Activated B cell treated with CpG ODN at 0.5 μM for 24 hours (primary cell): ENCODE measurements at regions of chr11 and their contacts with region 1.

Region 1: DNA sequence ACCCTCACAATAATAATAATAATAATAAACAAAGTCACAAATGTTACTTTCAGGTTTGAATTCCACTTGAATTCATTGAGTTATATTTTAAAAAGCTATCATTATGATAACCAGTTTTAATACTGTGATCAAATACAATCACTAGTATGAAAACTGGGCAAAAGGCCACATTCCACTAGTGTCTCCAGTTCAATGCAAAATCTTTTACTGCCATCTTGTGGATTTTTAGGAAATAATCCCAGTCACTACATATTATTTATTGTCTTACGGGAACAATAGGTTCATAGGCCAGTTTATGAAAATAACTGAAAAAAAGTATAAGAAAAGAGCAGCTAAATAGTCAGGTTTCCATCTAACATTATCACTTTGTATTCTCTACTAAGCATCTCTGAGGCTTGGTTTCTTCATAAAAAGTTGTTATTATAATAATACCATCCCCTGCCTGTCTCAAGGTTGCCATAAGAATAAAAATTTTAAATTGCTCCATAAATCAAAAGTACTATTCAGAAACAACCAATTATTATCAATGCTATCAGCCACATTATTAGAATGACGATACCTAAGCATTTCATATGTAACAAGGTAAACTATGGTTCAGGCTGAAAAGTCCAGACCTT is 533.9 kb upstream of the CCDC90B start:
- DNase-seq: no peak
- ATAC-seq: no peak
- H3K4me3 Mint-ChIP-seq: no peak overlapping the region
- H3K27ac Mint-ChIP-seq: no peak overlapping the region
- H3K4me1 Mint-ChIP-seq: no peaks in the 10 kb centered on the region
- H3K27me3 Mint-ChIP-seq: peaks cover 9% of the 10 kb centered on the region
- CTCF ChIP-seq: no peak

Region 2: DNA sequence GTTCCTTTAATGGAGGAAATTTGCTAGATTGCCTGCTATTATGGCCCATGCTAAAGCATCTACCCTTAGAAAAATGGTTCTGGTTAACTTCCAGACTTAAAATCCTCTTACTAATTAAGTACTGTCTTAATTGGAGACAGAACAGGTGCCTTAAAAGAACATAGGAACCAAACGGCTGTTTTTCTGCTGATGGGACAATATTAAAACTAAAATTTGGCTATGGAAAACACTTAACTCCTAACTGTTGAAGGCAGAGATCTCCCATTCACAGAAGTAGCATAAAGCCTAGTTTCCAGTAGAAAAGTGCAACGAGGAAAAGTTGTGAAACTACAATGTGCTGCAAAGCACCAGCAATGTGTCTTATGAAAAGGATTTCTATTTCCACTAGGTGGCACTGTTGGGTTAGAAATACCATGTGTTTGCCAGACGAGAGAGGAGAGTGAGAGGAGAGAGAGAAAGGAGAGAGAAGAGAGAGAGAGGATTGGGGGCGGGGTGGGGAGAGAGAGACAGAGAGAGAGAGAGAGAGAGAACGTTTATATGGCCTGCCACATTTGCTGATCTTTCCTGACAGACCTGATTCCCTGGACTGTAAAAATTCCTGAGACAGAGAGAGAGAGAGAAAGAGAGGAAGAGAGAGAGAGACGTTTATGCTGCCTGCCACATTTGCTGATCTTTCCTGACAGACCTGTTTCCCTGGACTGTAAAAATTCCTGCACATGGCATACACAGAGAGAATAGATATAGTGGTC is 1137.9 kb before region 1 on chr11:
- CTCF ChIA-PET with region 1: interaction called, 3 read pairs
- POLR2A ChIA-PET with region 1: interaction called, 3 read pairs
- intact Hi-C with region 1: loop called (anchors 1 kb)
- DNase-seq: no peak
- ATAC-seq: peak; percentile 28
- H3K4me3 Mint-ChIP-seq: no peak overlapping the region
- H3K27ac Mint-ChIP-seq: no peak overlapping the region
- H3K4me1 Mint-ChIP-seq: no peaks in the 10 kb centered on the region
- H3K27me3 Mint-ChIP-seq: peaks cover 13% of the 10 kb centered on the region
- CTCF ChIP-seq: no peak

Region 3: DNA sequence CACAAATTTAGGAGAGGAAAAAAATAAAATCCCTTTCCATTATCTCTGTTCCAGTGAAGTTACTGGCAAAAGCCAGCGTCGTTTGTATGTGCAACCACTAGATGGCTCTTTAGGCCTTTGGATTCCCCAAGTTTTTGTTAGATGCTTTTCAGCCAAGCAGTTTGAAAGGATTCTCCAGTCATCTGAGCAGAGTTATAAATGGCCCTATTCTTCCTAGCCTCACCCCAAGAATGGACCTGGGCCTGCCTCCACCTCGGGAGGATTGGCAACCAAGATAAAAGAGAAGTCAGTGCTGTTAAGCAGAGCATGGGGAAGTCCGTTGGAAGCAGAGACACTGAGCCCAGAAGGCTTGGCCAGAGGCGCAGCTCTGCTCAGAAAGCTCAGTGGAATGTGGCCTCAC is 1101.7 kb before region 1 on chr11:
- CTCF ChIA-PET with region 1: interaction called, 34 read pairs
- POLR2A ChIA-PET with region 1: no interaction called
- intact Hi-C with region 1: loop called (anchors 1 kb)
- DNase-seq: no peak
- ATAC-seq: no peak
- H3K4me3 Mint-ChIP-seq: no peak overlapping the region
- H3K27ac Mint-ChIP-seq: no peak overlapping the region
- H3K4me1 Mint-ChIP-seq: no peaks in the 10 kb centered on the region
- H3K27me3 Mint-ChIP-seq: peaks cover 6% of the 10 kb centered on the region
- CTCF ChIP-seq: peak; percentile 36

Region 4: GRCh38 chr11:82775736-82776346 is 1044.2 kb before region 1 on chr11:
- CTCF ChIA-PET with region 1: no interaction called
- POLR2A ChIA-PET with region 1: no interaction called
- intact Hi-C with region 1: loop called (anchors 1 kb)
- DNase-seq: no peak
- ATAC-seq: peak; percentile 49
- H3K4me3 Mint-ChIP-seq: no peak overlapping the region
- H3K27ac Mint-ChIP-seq: no peak overlapping the region
- H3K4me1 Mint-ChIP-seq: no peaks in the 10 kb centered on the region
- H3K27me3 Mint-ChIP-seq: peaks cover 18% of the 10 kb centered on the region
- CTCF ChIP-seq: no peak

Region 5: GRCh38 chr11:82906244-82906654 is 913.8 kb before region 1 on chr11:
- CTCF ChIA-PET with region 1: interaction called, 3 read pairs
- POLR2A ChIA-PET with region 1: no interaction called
- intact Hi-C with region 1: loop called (anchors 1 kb)
- DNase-seq: no peak
- ATAC-seq: no peak
- H3K4me3 Mint-ChIP-seq: no peak overlapping the region
- H3K27ac Mint-ChIP-seq: peak overlapping the region; percentile 38
- H3K4me1 Mint-ChIP-seq: peaks cover 44% of the 10 kb centered on the region
- H3K27me3 Mint-ChIP-seq: no peaks in the 10 kb centered on the region
- CTCF ChIP-seq: peak; percentile 35

Region 6: DNA sequence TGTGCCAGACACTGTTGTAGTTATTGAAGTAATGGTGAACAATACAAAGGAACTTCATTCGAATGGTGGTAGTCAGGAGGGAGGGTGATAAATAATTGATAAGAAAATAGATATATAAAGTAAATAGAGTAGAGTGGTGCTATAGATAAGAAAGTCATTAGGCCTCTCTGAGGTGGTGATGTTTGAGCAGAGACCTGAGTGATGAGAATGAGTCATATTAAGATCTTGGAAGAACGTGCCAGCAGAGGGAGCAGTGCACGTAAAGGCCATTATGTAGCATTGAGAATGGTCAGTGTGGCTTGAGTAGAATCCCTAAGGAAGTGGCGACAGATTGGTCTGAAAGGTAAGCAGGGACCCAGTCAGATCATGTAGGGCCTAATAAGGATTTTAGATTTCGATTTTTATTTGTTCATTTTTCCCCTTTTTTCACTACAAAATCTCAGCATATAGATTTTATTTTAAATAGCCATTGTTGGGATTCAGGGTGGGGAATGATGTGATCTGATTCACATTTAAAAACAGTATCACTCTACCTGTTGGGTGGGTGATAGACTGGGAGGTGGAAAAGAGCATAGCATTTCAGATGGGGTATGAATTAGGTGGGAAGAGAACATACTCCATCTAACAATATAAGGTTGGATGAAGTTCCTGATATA is 578.6 kb before region 1 on chr11:
- CTCF ChIA-PET with region 1: no interaction called
- POLR2A ChIA-PET with region 1: no interaction called
- intact Hi-C with region 1: loop called (anchors 1 kb)
- DNase-seq: no peak
- ATAC-seq: peak; percentile 47
- H3K4me3 Mint-ChIP-seq: no peak overlapping the region
- H3K27ac Mint-ChIP-seq: no peak overlapping the region
- H3K4me1 Mint-ChIP-seq: no peaks in the 10 kb centered on the region
- H3K27me3 Mint-ChIP-seq: no peaks in the 10 kb centered on the region
- CTCF ChIP-seq: no peak

Region 7: GRCh38 chr11:83292709-83293456 is 527.2 kb before region 1 on chr11:
- CTCF ChIA-PET with region 1: interaction called, 61 read pairs
- POLR2A ChIA-PET with region 1: no interaction called
- intact Hi-C with region 1: loop called (anchors 1 kb)
- DNase-seq: no peak
- ATAC-seq: peak; percentile 79
- H3K4me3 Mint-ChIP-seq: peak overlapping the region; percentile 21
- H3K27ac Mint-ChIP-seq: no peak overlapping the region
- H3K4me1 Mint-ChIP-seq: peaks cover 14% of the 10 kb centered on the region
- H3K27me3 Mint-ChIP-seq: no peaks in the 10 kb centered on the region
- CTCF ChIP-seq: no peak